Tibial artery (tissue), 4 donors: ENCODE measurements at regions of chr2 and their contacts with region 1.

Region 1: DNA sequence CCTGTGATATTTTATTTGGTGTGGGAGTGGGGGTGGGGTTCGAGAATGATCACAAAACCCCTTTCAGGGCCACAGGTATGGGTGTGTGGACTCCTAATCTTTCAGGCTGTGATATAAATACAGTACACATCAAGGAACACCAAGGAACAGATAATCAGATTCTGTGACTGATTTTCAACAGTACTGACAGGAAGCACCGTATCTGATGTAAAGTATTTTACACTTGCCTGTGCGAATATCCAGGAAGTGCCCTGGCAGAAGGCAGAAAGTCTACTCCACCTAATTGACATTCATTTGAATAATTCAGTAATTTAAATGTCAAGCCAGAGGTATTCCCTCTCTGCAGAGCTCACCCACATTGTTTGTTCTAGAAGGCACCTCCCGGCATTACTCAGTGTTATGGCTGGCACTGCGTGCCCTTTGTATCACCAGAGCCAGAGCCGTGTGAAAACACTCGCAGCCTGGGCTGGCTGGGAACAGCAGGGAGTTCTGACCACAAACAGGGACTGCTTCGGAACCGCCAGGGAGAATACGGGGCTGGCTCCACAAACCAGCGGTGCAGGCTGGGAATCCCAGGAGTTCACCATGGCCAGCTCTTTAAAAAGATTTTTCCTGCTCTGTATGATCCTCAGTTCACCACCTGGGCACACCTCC is 91.8 kb downstream of the ACVR1 start:
- DNase-seq: peak; percentile 65 to 87
- H3K4me3 ChIP-seq: peak overlapping the region in 1 of 2 donors; percentile 9
- H3K27ac ChIP-seq: peak overlapping the region; percentile 59 to 70
- H3K4me1 ChIP-seq: peaks cover 0 to 76% (median 41%) of the 10 kb centered on the region in 4 donors
- H3K27me3 ChIP-seq: no peaks in the 10 kb centered on the region
- CTCF ChIP-seq: no peak

Region 2: GRCh38 chr2:157291009-157291408 is 493.3 kb before region 1 on chr2:
- intact Hi-C with region 1: loop called (anchors 10 kb)
- DNase-seq: no peak
- H3K4me3 ChIP-seq: no peak overlapping the region
- H3K27ac ChIP-seq: no peak overlapping the region
- H3K4me1 ChIP-seq: peaks cover 0 to 13% (median 0%) of the 10 kb centered on the region in 4 donors
- H3K27me3 ChIP-seq: no peaks in the 10 kb centered on the region
- CTCF ChIP-seq: no peak

Region 3: DNA sequence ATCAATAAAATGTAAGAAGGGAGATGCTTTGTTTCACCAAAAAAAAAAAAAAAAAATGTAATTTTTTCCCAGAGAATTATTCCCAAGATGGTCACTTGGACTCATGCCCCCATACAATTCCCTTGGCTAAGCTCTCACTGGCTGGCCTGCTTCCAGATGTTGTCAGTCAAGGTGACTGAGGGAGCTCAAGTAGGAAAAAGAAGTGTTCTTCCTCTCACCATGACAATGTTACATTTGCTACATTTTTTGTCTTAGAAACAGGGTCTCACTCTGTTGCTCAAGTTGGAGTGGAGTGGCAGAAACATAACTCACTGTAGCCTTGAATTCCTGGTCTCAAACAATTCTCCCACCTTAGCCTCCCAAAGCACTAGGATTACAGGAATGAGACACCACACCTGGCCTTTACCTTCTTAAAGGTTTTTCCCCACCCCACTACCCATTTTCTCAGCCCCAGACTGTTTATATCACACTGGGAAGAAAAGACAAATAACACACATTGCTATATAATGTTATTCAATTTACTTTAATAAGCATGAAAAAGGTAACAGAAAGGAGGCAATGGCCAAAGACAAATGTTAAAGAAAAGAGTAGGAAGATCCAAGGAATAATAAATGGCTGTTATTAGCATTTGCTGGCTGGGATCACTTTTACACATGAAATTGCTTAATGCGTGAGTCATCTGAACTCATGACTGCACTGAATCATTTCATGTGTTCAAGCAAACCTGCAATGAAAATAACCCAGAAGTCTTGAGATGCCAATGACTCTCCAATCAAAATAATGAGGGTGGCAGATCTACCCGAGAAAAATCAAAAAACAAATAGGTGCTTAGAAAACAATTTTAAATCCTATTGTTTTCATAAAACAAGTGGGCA is 46.6 kb after region 1 on chr2:
- intact Hi-C with region 1: loop called (anchors 2 kb)
- DNase-seq: peak in 1 of 2 donors; percentile 57
- H3K4me3 ChIP-seq: no peak overlapping the region
- H3K27ac ChIP-seq: peak overlapping the region; percentile 87
- H3K4me1 ChIP-seq: peaks cover 0 to 53% (median 25%) of the 10 kb centered on the region in 4 donors
- H3K27me3 ChIP-seq: no peaks in the 10 kb centered on the region
- CTCF ChIP-seq: no peak

Region 4: DNA sequence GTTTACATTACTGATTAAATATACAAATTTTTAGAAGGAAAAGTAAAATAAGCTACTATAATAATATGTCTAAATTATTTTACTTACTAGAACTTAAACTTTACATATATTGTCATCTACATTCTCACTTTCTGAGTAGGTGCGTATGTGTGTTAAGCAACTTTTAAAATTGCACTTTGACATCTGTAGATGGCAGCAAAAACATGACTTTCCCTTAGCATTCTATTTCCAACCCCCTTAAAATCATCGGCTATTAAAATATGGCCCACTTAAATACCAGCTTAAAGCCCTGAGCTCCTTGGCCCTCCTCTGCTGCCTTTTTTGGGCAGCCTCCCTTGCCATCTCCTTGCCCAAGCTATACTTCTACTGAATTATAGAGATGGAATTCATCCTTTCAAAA is 395.4 kb after region 1 on chr2:
- intact Hi-C with region 1: no loop called
- DNase-seq: no peak
- H3K4me3 ChIP-seq: no peak overlapping the region
- H3K27ac ChIP-seq: no peak overlapping the region
- H3K4me1 ChIP-seq: no peaks in the 10 kb centered on the region
- H3K27me3 ChIP-seq: peaks cover 0 to 3% of the 10 kb centered on the region in 2 donors
- CTCF ChIP-seq: no peak